GM23248 (cell line): ENCODE measurements at regions of chr14 and their contacts with region 1.

Region 1: GRCh38 chr14:102316743-102317563 is 2.6 kb upstream of the ZNF839 start:
- DNase-seq: peak; percentile 97
- H3K4me3 ChIP-seq: peak overlapping the region; percentile 72
- H3K27ac ChIP-seq: peak overlapping the region; percentile 92
- H3K4me1 ChIP-seq: peaks cover 34% of the 10 kb centered on the region
- H3K27me3 ChIP-seq: no peaks in the 10 kb centered on the region

Region 2: GRCh38 chr14:101964297-101965144 is 352.4 kb before region 1 on chr14 and contains the start of gene DYNC1H1:
- in situ Hi-C with region 1: loop called (anchors 25 kb)
- DNase-seq: peak; percentile 97
- H3K4me3 ChIP-seq: peak within 1 kb of the TSS; percentile 95
- H3K27ac ChIP-seq: peak within 1 kb of the TSS; percentile 84
- H3K4me1 ChIP-seq: peaks cover 40% of the 10 kb centered on the region
- H3K27me3 ChIP-seq: no peaks in the 10 kb centered on the region
- total RNA-seq, gene DYNC1H1: 391 and 475 TPM in 2 replicates

Region 3: DNA sequence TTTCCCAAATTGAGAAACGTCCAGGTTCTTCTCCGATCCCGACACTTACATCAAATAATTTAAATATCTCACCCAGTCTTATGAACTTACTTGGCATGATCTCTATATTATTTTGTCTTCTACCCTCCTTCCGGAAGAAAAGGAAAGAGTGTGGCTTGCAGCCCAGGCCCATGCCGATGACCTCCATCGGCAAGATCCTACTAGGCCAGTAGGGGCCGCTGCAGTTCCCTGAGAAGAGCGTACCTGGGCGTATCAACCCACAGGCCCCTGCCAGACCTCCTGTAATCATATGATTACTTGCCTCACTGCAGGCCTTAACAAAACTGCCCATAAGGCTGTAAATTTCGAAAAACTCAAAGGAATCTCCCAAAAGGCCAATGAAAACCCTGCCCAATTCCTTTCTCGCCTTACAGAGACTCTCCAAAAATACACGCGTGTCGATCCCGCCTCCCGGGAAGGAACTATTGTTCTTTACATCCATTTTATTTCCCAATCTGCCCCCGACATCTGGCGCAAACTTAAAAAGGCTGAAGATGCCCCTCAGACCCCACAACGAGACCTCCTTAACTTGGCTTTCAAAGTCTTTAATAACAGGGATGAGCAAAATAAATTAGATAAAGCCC is 81.6 kb before region 1 on chr14:
- in situ Hi-C with region 1: loop called (anchors 5 kb)
- DNase-seq: peak; percentile 87
- H3K4me3 ChIP-seq: no peak overlapping the region
- H3K27ac ChIP-seq: no peak overlapping the region
- H3K4me1 ChIP-seq: peaks cover 14% of the 10 kb centered on the region
- H3K27me3 ChIP-seq: no peaks in the 10 kb centered on the region